GM12878 (cell line): ENCODE measurements at regions of chr14 and their contacts with region 1.

Region 1: GRCh38 chr14:24215495-24216344 is at the start of gene MDP1:
- DNase-seq: peak; percentile 79
- ATAC-seq: peak; percentile 83
- H3K4me3 ChIP-seq: peak within 1 kb of the TSS; percentile 86
- H3K27ac ChIP-seq: peak within 1 kb of the TSS; percentile 82
- H3K4me1 ChIP-seq: peaks cover 15% of the 10 kb centered on the region
- H3K27me3 ChIP-seq: no peaks in the 10 kb centered on the region
- CTCF ChIP-seq: peak; percentile 82 to 94 (median 83); a peak in 5 of 6 replicates
- EP300 ChIP-seq: 0 out of 4 replicates have a peak, but pooled peaks have one; percentile 8 to 31
- POLR2A ChIP-seq: peak; percentile 93
- RAD21 ChIP-seq: peak; percentile 76
- polyA plus RNA-seq, gene MDP1: 39.2 to 45.8 TPM

Region 2: DNA sequence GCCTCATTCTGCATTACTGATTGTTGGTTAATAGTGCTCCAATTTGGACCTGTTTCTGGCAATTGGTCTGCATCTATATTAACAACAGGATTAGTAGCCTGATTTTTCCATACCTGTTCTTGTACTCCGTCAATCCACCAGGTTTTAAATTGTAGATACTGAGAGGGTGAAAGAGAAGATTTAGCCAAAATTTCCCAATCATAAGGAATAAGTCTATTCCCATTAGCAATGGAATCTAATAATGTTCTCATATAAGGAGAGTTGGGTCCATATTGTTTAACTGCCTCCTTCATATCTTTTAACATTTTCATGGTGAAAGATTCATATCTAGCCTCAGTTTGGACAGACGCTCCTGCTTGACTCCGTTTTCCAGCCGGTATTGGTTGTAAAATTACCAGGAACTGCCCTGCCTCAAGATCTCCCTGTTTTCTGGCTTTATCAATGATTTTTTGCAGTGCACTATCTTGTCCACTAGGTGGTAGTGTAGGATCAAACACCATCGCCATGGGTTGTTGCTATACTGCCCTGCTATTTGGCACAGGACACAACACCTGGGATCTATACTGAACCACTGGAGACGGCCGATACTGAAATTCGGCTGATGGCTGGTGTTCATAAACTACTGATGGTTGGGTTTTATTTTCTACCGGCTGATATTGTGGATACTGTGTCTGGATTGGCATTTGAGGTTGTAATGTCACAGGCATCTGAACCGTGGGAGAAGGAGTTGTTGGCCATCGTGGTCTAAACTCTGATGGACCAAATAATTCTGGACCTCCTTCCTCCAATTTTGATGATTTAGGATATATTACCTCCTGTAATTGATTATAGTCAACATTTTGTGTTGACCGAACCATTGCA is 201.8 kb before region 1 on chr14:
- CTCF ChIA-PET with region 1: no interaction called
- POLR2A ChIA-PET with region 1: no interaction called
- RAD21 ChIA-PET with region 1: no interaction called
- SMC1A ChIA-PET with region 1: no interaction called
- in situ Hi-C with region 1: no loop called
- intact Hi-C with region 1: loop called (anchors 10 kb)
- DNase-seq: peak; percentile 57
- ATAC-seq: peak; percentile 96
- H3K4me3 ChIP-seq: no peak overlapping the region
- H3K27ac ChIP-seq: no peak overlapping the region
- H3K4me1 ChIP-seq: no peaks in the 10 kb centered on the region
- H3K27me3 ChIP-seq: no peaks in the 10 kb centered on the region
- CTCF ChIP-seq: peak; percentile 77 to 91 (median 81)
- EP300 ChIP-seq: no peak
- POLR2A ChIP-seq: no peak
- RAD21 ChIP-seq: peak; percentile 97

Region 3: DNA sequence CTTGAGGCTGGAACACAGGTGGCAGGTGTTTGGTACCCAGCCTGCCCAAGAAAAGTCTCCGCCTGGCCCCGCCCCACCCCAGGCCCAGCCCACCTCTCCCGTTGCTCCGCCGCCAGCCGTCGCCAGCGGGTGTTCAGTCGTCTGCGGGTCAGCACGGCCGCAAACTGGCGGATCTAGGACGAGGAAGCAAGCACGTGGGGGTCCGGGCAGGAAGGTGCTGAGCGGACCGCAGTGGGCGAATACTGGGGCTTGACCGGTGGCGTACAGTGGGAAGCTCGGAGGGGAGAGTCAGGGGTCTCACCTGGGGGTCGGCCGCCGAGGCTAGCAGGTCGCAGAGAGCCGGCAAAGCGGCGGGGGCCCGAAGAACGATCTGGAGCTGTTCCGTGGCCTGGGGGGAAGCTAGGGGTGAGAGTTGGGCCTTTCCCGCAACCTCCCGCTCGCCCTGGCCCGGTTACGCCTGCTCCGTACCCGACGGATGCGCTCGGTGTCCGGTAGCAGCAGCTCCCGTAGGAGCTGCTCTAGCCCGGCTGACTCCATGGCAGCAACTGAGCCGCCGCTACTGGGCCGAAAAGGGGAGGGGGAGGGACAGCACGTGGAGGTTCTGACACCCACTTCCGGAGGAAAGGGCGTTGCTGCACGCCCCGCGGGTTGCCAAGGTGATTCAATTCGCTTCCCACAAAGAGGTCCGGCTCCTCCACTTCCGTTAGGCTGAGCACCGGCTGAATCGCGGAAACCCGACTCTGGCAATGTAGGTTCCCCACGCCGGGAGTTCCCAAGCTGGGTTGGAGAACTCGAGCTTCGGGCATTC is 27.3 kb before region 1 on chr14 and contains the start of gene IPO4:
- CTCF ChIA-PET with region 1: interaction called, 9 read pairs
- POLR2A ChIA-PET with region 1: interaction called, 50 read pairs
- RAD21 ChIA-PET with region 1: interaction called, 7 read pairs
- SMC1A ChIA-PET with region 1: no interaction called
- in situ Hi-C with region 1: no loop called
- intact Hi-C with region 1: no loop called
- DNase-seq: peak; percentile 88
- ATAC-seq: peak; percentile 94
- H3K4me3 ChIP-seq: peak within 1 kb of the TSS; percentile 79
- H3K27ac ChIP-seq: peak within 1 kb of the TSS; percentile 34
- H3K4me1 ChIP-seq: 0 out of 2 replicates have a peak, but pooled peaks cover 4% of the 10 kb centered on the region
- H3K27me3 ChIP-seq: no peaks in the 10 kb centered on the region
- CTCF ChIP-seq: no peak
- EP300 ChIP-seq: peak in 1 of 2 experiments; percentile 70; a peak in 2 of 4 replicates
- POLR2A ChIP-seq: peak; percentile 94
- RAD21 ChIP-seq: no peak
- polyA plus RNA-seq, gene IPO4: 7.8 to 10.3 TPM

Region 4: GRCh38 chr14:24232121-24232644 is 16.5 kb after region 1 on chr14 and contains the start of gene NEDD8:
- CTCF ChIA-PET with region 1: interaction called, 14 read pairs
- POLR2A ChIA-PET with region 1: interaction called, 9 read pairs
- RAD21 ChIA-PET with region 1: interaction called, 9 read pairs
- SMC1A ChIA-PET with region 1: interaction called, 12 read pairs
- in situ Hi-C with region 1: no loop called
- intact Hi-C with region 1: loop called (anchors 1 kb)
- DNase-seq: peak; percentile 69
- ATAC-seq: peak; percentile 86
- H3K4me3 ChIP-seq: peak within 1 kb of the TSS; percentile 87
- H3K27ac ChIP-seq: peak within 1 kb of the TSS; percentile 84
- H3K4me1 ChIP-seq: peaks cover 14% of the 10 kb centered on the region
- H3K27me3 ChIP-seq: no peaks in the 10 kb centered on the region
- CTCF ChIP-seq: no peak
- EP300 ChIP-seq: no peak
- POLR2A ChIP-seq: peak; percentile 72; the same call in 1 of the 2 replicates
- RAD21 ChIP-seq: no peak
- polyA plus RNA-seq, gene NEDD8: 838 to 991 TPM

Region 5: GRCh38 chr14:24310646-24311604 is 95.2 kb after region 1 on chr14 and contains the start of gene LTB4R:
- CTCF ChIA-PET with region 1: interaction called, 41 read pairs
- POLR2A ChIA-PET with region 1: interaction called, 4 read pairs
- RAD21 ChIA-PET with region 1: interaction called, 23 read pairs
- SMC1A ChIA-PET with region 1: interaction called, 11 read pairs
- in situ Hi-C with region 1: no loop called
- intact Hi-C with region 1: no loop called
- DNase-seq: no peak
- ATAC-seq: peak; percentile 75
- H3K4me3 ChIP-seq: peak within 1 kb of the TSS; percentile 47
- H3K27ac ChIP-seq: peak within 1 kb of the TSS; percentile 45; the same call in 1 of the 2 replicates
- H3K4me1 ChIP-seq: peaks cover 37% of the 10 kb centered on the region
- H3K27me3 ChIP-seq: no peaks in the 10 kb centered on the region
- CTCF ChIP-seq: peak; percentile 10 to 40 (median 29); a peak in 3 of 6 replicates
- EP300 ChIP-seq: no peak
- POLR2A ChIP-seq: peak; percentile 54; the same call in 1 of the 2 replicates
- RAD21 ChIP-seq: no peak
- polyA plus RNA-seq, gene LTB4R: 1.2 to 1.7 TPM